ENCODE measurements at regions of chr12 and their contacts with region 1.

Region 1: GRCh38 chr12:70645494-70646317 is 8.5 kb upstream of the PTPRB start:
- DNase-seq: peak; percentile 97
- ATAC-seq: peak; percentile 85
- H3K4me3 ChIP-seq: peak overlapping the region; percentile 30; the same call in 1 of the 2 replicates
- H3K27ac ChIP-seq: peak overlapping the region; percentile 99
- H3K4me1 ChIP-seq: peaks cover 55% of the 10 kb centered on the region
- H3K27me3 ChIP-seq: no peaks in the 10 kb centered on the region
- CTCF ChIP-seq: no peak

Region 2: GRCh38 chr12:70660620-70661219 is 15.0 kb after region 1 on chr12:
- CTCF ChIA-PET with region 1: interaction called, 3 read pairs
- POLR2A ChIA-PET with region 1: no interaction called
- intact Hi-C with region 1: loop called (anchors 2 kb)
- DNase-seq: peak; percentile 82
- ATAC-seq: peak; percentile 93
- H3K4me3 ChIP-seq: no peak overlapping the region
- H3K27ac ChIP-seq: peak overlapping the region; percentile 80
- H3K4me1 ChIP-seq: peaks cover 23% of the 10 kb centered on the region
- H3K27me3 ChIP-seq: no peaks in the 10 kb centered on the region
- CTCF ChIP-seq: no peak

Region 3: GRCh38 chr12:70692681-70693288 is 47.1 kb after region 1 on chr12:
- CTCF ChIA-PET with region 1: no interaction called
- POLR2A ChIA-PET with region 1: no interaction called
- intact Hi-C with region 1: loop called (anchors 5 kb)
- DNase-seq: peak; percentile 58
- ATAC-seq: peak; percentile 71
- H3K4me3 ChIP-seq: no peak overlapping the region
- H3K27ac ChIP-seq: no peak overlapping the region
- H3K4me1 ChIP-seq: peaks cover 10% of the 10 kb centered on the region; the same call in 1 of the 2 replicates
- H3K27me3 ChIP-seq: no peaks in the 10 kb centered on the region
- CTCF ChIP-seq: peak; percentile 80